ENCODE measurements at regions of chr19 and their contacts with region 1.

Region 1: DNA sequence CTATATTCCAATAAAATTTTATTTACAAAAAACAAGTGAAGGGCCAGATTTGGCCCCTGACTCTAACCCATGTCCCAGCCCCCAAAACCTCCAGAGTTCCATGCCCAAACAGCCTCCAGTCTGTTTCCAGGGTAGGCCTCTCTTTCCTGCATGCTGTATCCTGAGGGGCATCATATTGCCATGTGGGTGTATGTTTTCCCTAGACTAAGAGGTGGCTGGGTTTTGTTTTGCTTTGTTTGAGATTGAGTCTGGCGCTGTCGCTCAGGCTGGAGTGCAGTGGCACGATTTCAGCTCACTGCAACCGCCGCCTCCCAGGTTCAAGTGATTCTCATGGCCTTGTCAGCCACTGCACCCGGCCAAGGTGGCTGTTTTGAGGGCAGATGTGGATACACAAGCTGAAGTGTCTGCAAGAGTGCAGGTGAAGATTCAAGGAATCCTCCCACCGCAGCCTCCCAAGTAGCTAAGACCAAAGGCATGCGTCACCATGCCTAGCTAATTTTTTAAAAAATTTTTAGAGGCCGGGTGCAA is 23.6 kb upstream of the LSM14A start:
- DNase-seq: no peak
- H3K4me3 Mint-ChIP-seq: no peak overlapping the region
- H3K27ac Mint-ChIP-seq: no peak overlapping the region
- H3K4me1 Mint-ChIP-seq: no peaks in the 10 kb centered on the region
- H3K27me3 Mint-ChIP-seq: peaks cover 3% of the 10 kb centered on the region

Region 2: GRCh38 chr19:34176581-34176980 is 27.9 kb after region 1 on chr19:
- CTCF ChIA-PET with region 1: interaction called, 3 read pairs
- POLR2A ChIA-PET with region 1: interaction called, 10 read pairs
- DNase-seq: no peak
- H3K4me3 Mint-ChIP-seq: peak overlapping the region; percentile 10
- H3K27ac Mint-ChIP-seq: no peak overlapping the region
- H3K4me1 Mint-ChIP-seq: peaks cover 67% of the 10 kb centered on the region
- H3K27me3 Mint-ChIP-seq: no peaks in the 10 kb centered on the region

Measured in activated CD4-positive, alpha-beta T cell treated with anti-CD3 and anti-CD28 coated beads, Interleukin-2, amount 10 ng/mL, durations not matched to agents 7 days and 5 days (primary cell).